ENCODE measurements at regions of chr9 and their contacts with region 1.

Region 1: GRCh38 chr9:5628530-5629311 is at the start of gene RIC1:
- DNase-seq: peak; percentile 97
- H3K4me3 ChIP-seq: peak within 1 kb of the TSS; percentile 55 to 90 (median 88)
- H3K27ac ChIP-seq: peak within 1 kb of the TSS; percentile 92 to 98 (median 98)
- H3K4me1 ChIP-seq: peaks cover 0 to 62% (median 42%) of the 10 kb centered on the region in 4 donors
- H3K27me3 ChIP-seq: no peaks in the 10 kb centered on the region
- CTCF ChIP-seq: no peak
- EP300 ChIP-seq: no peak
- POLR2A ChIP-seq: peak; percentile 78 to 82
- total RNA-seq, gene RIC1: 29.1 to 44.3 (median 32.3) TPM

Region 2: GRCh38 chr9:4679268-4680172 is 949.2 kb before region 1 on chr9 and contains the start of gene CDC37L1:
- intact Hi-C with region 1: loop called (anchors 5 kb)
- DNase-seq: peak; percentile 99
- H3K4me3 ChIP-seq: peak within 1 kb of the TSS; percentile 69 to 96 (median 82)
- H3K27ac ChIP-seq: peak within 1 kb of the TSS; percentile 93 to 99 (median 98)
- H3K4me1 ChIP-seq: peaks cover 0 to 40% (median 21%) of the 10 kb centered on the region in 4 donors
- H3K27me3 ChIP-seq: no peaks in the 10 kb centered on the region
- CTCF ChIP-seq: peak; percentile 70 to 82 (median 76)
- EP300 ChIP-seq: peak in 2 of 4 donors; percentile 34 to 64
- POLR2A ChIP-seq: peak; percentile 95 to 96
- total RNA-seq, gene CDC37L1: 30.7 to 40.6 (median 33.3) TPM

Region 3: GRCh38 chr9:5435912-5436311 is 192.8 kb before region 1 on chr9:
- intact Hi-C with region 1: no loop called
- DNase-seq: no peak
- H3K4me3 ChIP-seq: no peak overlapping the region
- H3K27ac ChIP-seq: no peak overlapping the region
- H3K4me1 ChIP-seq: peaks cover 0 to 16% (median 15%) of the 10 kb centered on the region in 4 donors
- H3K27me3 ChIP-seq: no peaks in the 10 kb centered on the region
- CTCF ChIP-seq: no peak
- EP300 ChIP-seq: no peak
- POLR2A ChIP-seq: no peak

Region 4: DNA sequence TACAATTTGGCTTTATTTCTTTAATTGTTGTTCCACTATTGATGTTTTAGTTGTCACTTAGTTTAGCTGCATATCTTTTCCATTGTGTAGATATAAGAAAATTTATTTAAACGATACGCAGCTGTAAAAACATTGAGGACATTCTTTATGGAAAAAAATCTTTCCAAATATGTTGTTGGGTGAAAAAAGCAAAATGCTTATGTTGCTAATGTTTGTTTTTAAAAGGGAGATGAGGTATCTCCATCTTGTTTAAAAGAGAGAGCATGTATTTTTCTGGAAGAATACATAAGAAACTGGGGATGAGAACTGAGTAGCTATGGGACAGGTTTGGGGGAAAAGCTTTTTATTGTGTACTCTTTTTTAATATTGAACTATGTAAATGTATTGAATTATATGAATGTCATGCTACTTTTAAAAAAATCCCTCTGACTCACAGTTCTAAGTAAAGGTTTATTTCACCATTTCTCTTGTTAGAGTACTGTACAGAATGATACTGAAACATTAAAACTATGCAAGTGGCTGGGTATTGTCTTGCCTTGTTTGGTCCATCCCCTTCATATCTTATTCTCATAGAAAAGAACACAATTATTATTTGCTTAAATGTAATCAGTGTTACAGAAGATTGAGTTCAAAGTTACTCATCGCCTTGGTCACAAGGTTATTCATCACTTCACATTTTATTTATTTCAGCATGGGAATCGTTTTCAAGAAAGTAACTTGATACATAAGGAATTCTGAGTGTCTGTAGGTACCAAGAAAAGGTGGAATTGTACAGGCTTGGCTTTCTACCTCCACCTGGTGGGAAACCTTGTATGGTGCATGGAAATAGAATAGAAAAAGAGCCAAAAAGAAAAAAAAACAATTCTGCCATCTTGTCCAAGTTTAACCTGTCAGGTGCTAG is 86.0 kb after region 1 on chr9:
- intact Hi-C with region 1: loop called (anchors 10 kb)
- DNase-seq: no peak
- H3K4me3 ChIP-seq: no peak overlapping the region
- H3K27ac ChIP-seq: no peak overlapping the region
- H3K4me1 ChIP-seq: peaks cover 0 to 15% (median 6%) of the 10 kb centered on the region in 4 donors
- H3K27me3 ChIP-seq: no peaks in the 10 kb centered on the region
- CTCF ChIP-seq: no peak
- EP300 ChIP-seq: no peak
- POLR2A ChIP-seq: no peak

Region 5: DNA sequence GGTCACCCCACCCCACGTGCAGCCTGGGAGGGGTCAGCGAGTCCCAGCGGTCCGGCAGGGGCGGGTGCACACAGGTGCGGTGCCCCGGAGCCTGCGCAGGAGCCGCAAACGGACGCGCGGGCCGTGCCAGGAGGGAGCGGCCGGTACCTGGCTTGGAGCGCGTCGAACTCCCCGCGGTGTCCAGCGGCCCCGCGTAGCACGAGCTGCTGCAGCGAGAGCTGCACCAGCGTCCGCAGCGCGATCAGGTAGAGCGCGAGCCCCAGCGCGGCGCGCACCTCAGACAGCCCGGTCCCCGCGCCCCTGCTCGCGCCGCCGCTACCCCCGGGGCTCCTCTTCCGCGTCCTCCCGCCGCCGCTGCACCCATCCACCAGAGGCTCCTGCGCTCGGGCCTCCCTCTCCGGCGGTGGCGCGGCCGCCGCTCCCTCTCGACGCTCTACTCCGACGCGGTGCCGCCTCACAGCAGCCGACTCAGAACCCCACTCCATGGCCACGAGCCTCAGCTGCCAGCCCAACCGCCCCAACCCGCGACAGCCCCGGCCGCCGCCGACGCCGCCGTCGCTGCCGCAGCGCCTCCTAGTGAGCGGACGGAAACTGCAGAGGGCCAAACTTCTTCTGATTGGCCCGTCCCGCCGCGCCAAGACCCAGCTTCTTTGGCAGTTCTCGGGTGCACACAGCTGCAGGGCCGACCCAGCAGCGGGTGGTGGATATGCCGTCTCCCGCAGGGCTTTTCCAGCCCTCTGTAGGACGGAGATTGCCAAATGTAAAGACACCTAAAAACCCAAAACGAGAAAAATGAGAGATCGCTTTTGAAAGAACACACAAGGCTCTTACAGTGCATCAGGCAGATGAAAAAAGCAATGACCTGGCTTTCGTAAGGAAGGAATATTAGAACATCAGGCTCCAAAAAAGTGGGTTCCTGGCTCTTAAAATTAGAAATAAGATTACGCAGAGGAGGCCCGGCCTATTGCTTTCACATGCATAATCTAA is 204.1 kb after region 1 on chr9 and contains the start of gene ERMP1:
- intact Hi-C with region 1: loop called (anchors 2 kb)
- DNase-seq: peak; percentile 93
- H3K4me3 ChIP-seq: peak within 1 kb of the TSS; percentile 77 to 97 (median 88)
- H3K27ac ChIP-seq: peak within 1 kb of the TSS; percentile 76 to 82 (median 80)
- H3K4me1 ChIP-seq: peaks cover 0 to 25% (median 16%) of the 10 kb centered on the region in 4 donors
- H3K27me3 ChIP-seq: no peaks in the 10 kb centered on the region
- CTCF ChIP-seq: peak; percentile 75 to 87 (median 84)
- EP300 ChIP-seq: no peak
- POLR2A ChIP-seq: no peak
- total RNA-seq, gene ERMP1: 7.9 to 12.2 (median 8.6) TPM

Region 6: GRCh38 chr9:6412487-6413364 is 784.0 kb after region 1 on chr9 and contains the start of gene UHRF2:
- intact Hi-C with region 1: loop called (anchors 5 kb)
- DNase-seq: peak; percentile 99
- H3K4me3 ChIP-seq: peak within 1 kb of the TSS; percentile 79 to 99 (median 88)
- H3K27ac ChIP-seq: peak within 1 kb of the TSS; percentile 86 to 90 (median 90)
- H3K4me1 ChIP-seq: peaks cover 0 to 43% (median 28%) of the 10 kb centered on the region in 4 donors
- H3K27me3 ChIP-seq: no peaks in the 10 kb centered on the region
- CTCF ChIP-seq: no peak
- EP300 ChIP-seq: no peak
- POLR2A ChIP-seq: peak; percentile 45 to 46
- total RNA-seq, gene UHRF2: 49.1 to 55.6 (median 53.6) TPM

Region 7: DNA sequence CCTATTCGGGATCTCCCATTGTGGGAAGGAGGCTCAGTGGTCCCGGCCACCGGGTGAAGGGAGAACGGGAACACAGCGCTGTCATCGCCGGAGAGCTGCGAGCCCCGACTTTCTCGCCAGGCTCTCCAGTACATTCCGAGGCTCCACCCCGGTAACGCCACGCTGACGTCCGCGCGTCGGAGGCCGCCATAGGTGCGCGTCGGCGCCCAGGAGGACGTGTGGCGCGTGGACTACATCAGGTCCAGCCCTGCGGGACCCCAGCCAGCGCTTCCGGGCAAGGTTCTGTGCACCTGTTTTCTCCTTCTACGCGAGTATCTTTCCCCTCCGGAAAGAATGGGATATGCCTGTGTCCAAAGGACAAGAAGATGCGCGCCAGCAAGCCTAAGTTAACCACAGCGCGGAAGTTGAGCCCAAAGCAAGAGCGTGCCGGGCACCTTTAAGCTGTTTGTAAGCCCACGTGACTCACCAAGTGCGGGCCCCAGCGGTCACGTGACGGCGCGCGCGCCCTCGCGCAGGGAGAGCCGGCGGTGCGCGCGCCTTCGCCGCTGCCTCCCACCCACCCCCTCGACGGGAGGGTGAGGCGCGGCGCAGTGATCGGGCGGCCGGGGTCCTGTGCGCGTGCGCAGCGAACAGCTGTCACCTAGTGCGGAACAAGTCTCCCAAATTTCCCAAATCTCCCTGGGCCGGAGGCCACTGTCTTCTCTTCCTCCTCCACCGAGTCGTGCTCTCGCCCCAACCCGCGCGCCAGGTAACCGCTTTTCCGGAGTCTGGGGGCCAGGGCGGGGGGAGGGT is 1128.9 kb after region 1 on chr9 and contains the start of gene KDM4C:
- intact Hi-C with region 1: loop called (anchors 5 kb)
- DNase-seq: peak; percentile 98
- H3K4me3 ChIP-seq: peak within 1 kb of the TSS; percentile 74 to 99 (median 89)
- H3K27ac ChIP-seq: peak within 1 kb of the TSS; percentile 95 to 99 (median 98)
- H3K4me1 ChIP-seq: peaks cover 0 to 19% (median 10%) of the 10 kb centered on the region in 4 donors
- H3K27me3 ChIP-seq: no peaks in the 10 kb centered on the region
- CTCF ChIP-seq: no peak
- EP300 ChIP-seq: peak in 2 of 4 donors; percentile 36 to 64
- POLR2A ChIP-seq: peak; percentile 74 to 88
- total RNA-seq, gene KDM4C: 28.8 to 33.5 (median 29.8) TPM